H1 (cell line): ENCODE measurements at regions of chr19 and their contacts with region 1.

Region 1: DNA sequence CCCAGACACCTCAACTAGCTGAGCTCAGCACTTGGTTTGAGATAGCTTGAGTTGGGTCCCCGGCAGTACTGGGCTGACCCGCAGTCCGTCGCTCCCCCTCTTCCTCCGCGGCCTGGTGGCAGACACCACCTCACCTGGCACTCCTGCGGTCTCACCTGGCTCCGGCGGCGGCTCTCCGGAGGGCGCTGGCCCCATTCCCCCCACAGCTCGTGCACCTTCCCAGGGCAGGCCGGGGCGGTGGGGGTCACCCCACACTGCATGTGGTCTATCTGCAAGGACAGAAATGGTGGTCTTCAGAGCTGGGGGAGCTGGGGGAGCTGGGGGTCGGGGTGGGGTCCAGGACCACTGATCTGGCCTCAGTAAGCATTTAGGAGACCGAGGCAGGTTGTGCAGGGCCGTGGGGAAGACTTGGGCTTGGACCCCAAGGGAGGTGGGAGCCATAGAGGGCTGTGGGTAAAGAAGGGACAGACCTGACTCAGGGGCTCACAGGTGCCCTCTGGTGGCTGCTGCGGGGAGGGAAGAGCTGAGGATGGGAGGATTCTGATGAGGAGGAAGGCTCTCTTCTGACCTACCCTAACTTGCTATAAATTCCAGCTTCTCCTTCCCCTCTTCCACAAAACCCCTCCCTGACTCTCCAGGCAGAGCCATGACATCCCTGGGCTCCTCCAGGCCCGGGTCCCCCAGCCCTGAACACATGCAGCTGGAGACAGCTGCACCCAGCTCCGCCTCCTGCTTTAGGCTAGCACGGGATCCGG is 6.7 kb upstream of the PLIN4 start:
- DNase-seq: peak in 1 of 2 experiments; percentile 95
- H3K4me3 ChIP-seq: no peak overlapping the region
- H3K27ac ChIP-seq: no peak overlapping the region
- H3K4me1 ChIP-seq: no peaks in the 10 kb centered on the region; a peak in 2 of 7 replicates
- H3K27me3 ChIP-seq: peaks cover 0 to 10% (median 5%) of the 10 kb centered on the region in 4 experiments; a peak in 3 of 7 replicates
- CTCF ChIP-seq: peak; percentile 74 to 98 (median 95)
- EP300 ChIP-seq: no peak
- POLR2A ChIP-seq: no peak
- RAD21 ChIP-seq: peak; percentile 34 to 45

Region 2: GRCh38 chr19:4449022-4449638 is 75.9 kb before region 1 on chr19:
- CTCF ChIA-PET with region 1: interaction called, 34 read pairs
- POLR2A ChIA-PET with region 1: interaction called, 3 read pairs
- DNase-seq: no peak
- H3K4me3 ChIP-seq: no peak overlapping the region
- H3K27ac ChIP-seq: no peak overlapping the region
- H3K4me1 ChIP-seq: no peaks in the 10 kb centered on the region; a peak in 3 of 7 replicates
- H3K27me3 ChIP-seq: no peaks in the 10 kb centered on the region
- CTCF ChIP-seq: peak in 1 of 3 experiments; percentile 25; a peak in 1 of 4 replicates
- EP300 ChIP-seq: no peak
- POLR2A ChIP-seq: peak in 1 of 2 experiments; percentile 36; a peak in 1 of 3 replicates
- RAD21 ChIP-seq: no peak; a peak in 1 of 4 replicates

Region 3: GRCh38 chr19:4505897-4506744 is 18.9 kb before region 1 on chr19:
- CTCF ChIA-PET with region 1: interaction called, 40 read pairs
- POLR2A ChIA-PET with region 1: interaction called, 7 read pairs
- DNase-seq: no peak
- H3K4me3 ChIP-seq: no peak overlapping the region
- H3K27ac ChIP-seq: no peak overlapping the region
- H3K4me1 ChIP-seq: no peaks in the 10 kb centered on the region
- H3K27me3 ChIP-seq: peaks cover 2 to 16% (median 13%) of the 10 kb centered on the region in 4 experiments; a peak in 6 of 7 replicates
- CTCF ChIP-seq: no peak
- EP300 ChIP-seq: no peak
- POLR2A ChIP-seq: no peak
- RAD21 ChIP-seq: no peak

Region 4: GRCh38 chr19:4547303-4548237 is 22.6 kb after region 1 on chr19:
- CTCF ChIA-PET with region 1: interaction called, 174 read pairs
- POLR2A ChIA-PET with region 1: interaction called, 4 read pairs
- DNase-seq: no peak
- H3K4me3 ChIP-seq: no peak overlapping the region
- H3K27ac ChIP-seq: no peak overlapping the region
- H3K4me1 ChIP-seq: no peaks in the 10 kb centered on the region; a peak in 1 of 7 replicates
- H3K27me3 ChIP-seq: no peaks in the 10 kb centered on the region
- CTCF ChIP-seq: peak; percentile 42 to 79 (median 65)
- EP300 ChIP-seq: no peak
- POLR2A ChIP-seq: no peak
- RAD21 ChIP-seq: peak; percentile 9 to 22; a peak in 1 of 4 replicates

Region 5: DNA sequence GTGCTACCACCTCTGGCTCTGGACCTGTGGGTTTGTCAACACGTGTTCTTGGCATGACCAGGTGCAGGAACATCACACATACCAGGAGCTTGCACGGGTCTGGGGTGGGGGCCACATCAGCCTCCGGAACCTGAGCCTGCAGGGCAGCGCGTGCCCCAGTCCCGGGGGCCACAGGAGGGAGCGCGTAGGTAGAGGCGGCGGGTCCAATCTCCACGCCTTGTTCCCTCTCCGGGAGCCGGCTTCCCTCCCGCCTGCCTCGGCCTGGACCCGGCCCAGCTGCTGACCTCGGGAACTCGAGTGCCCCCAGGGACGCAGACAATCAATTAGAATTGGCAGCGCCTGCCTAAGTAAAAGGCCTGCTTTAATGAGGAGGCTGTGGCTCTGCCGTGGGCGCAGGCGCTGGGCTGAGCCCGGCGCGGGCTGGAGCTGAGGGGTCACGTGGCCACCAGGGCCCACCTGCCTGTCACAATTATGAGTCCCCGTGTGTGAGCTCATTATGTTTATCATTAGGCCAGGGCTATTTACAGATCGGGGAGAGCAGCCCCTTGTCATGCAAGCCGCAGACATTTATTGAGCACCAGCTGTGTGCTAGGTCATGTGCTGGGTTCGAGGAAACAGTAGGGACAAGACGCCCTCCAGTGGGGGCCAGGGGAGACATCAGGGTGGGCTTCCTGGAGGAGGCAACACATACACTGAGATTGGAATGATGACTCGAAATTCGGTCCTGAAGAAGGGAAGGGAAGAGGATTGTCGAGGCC is 82.1 kb after region 1 on chr19:
- CTCF ChIA-PET with region 1: no interaction called
- POLR2A ChIA-PET with region 1: no interaction called
- DNase-seq: peak in 1 of 2 experiments; percentile 74
- H3K4me3 ChIP-seq: peak overlapping the region; percentile 3 to 47 (median 25); a peak in 5 of 8 replicates
- H3K27ac ChIP-seq: no peak overlapping the region
- H3K4me1 ChIP-seq: peaks cover 0 to 4% (median 2%) of the 10 kb centered on the region in 4 experiments; a peak in 4 of 7 replicates
- H3K27me3 ChIP-seq: peaks cover 0 to 2% (median 0%) of the 10 kb centered on the region in 4 experiments; a peak in 4 of 7 replicates
- CTCF ChIP-seq: peak; percentile 50 to 68 (median 62)
- EP300 ChIP-seq: no peak
- POLR2A ChIP-seq: no peak
- RAD21 ChIP-seq: peak; percentile 53 to 70

Region 6: DNA sequence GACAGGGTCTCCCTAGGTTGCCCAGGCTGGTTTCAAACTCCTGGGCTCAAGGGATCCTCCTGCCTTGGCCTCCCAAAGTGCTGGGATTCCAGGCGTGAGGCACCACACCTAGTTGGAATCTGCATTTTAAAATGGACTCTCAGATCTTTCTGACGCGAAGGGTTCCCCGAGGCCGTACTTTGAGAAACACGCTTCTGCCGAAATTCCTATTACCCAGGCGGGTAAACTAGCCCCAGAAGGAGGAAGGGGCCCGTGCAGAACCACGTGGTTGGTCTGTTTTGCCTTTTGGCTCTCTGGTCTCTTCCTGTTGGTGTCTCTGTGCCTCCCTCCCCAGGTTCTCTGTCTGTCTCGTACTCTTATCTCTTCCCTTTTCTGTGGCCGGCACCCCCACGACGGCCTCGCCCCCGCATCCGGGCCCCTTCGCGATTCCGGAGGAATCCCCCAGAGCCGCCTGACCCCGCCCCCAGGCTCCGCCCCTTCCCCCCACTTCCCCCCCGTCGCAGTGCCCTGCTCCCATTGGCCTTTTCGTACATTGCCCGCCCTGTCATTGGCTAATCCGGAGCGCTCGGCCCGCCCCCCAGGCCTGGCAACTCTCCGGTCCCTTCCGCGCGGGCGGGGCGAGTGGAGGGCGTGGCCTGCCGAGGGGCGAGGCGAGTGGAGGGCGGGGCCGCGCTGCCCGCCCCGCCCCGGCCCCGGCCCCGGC is 114.0 kb after region 1 on chr19 and contains the start of gene TNFAIP8L1:
- CTCF ChIA-PET with region 1: interaction called, 46 read pairs
- POLR2A ChIA-PET with region 1: interaction called, 3 read pairs
- DNase-seq: peak; percentile 81 to 99
- H3K4me3 ChIP-seq: peak within 1 kb of the TSS; percentile 45 to 69 (median 58)
- H3K27ac ChIP-seq: peak within 1 kb of the TSS; percentile 35; the same call in 1 of the 2 replicates
- H3K4me1 ChIP-seq: peaks cover 0 to 10% (median 6%) of the 10 kb centered on the region in 4 experiments; a peak in 3 of 7 replicates
- H3K27me3 ChIP-seq: peaks cover 0 to 13% (median 10%) of the 10 kb centered on the region in 4 experiments; a peak in 5 of 7 replicates
- CTCF ChIP-seq: no peak
- EP300 ChIP-seq: no peak
- POLR2A ChIP-seq: peak in 1 of 2 experiments; percentile 56; a peak in 2 of 3 replicates
- RAD21 ChIP-seq: no peak
- total RNA-seq, gene TNFAIP8L1: 5.9 and 6.1 TPM in 2 replicates

Region 7: GRCh38 chr19:4676955-4677731 is 152.2 kb after region 1 on chr19:
- CTCF ChIA-PET with region 1: no interaction called
- POLR2A ChIA-PET with region 1: no interaction called
- DNase-seq: peak; percentile 75 to 91
- H3K4me3 ChIP-seq: peak overlapping the region in 1 of 4 experiments; percentile 20; a peak in 1 of 8 replicates
- H3K27ac ChIP-seq: no peak overlapping the region
- H3K4me1 ChIP-seq: peaks cover 0 to 11% (median 8%) of the 10 kb centered on the region in 4 experiments; a peak in 6 of 7 replicates
- H3K27me3 ChIP-seq: no peaks in the 10 kb centered on the region; a peak in 1 of 7 replicates
- CTCF ChIP-seq: peak; percentile 73 to 95 (median 92)
- EP300 ChIP-seq: no peak
- POLR2A ChIP-seq: no peak
- RAD21 ChIP-seq: peak; percentile 24 to 37; a peak in 2 of 4 replicates